PC-9 (cell line): ENCODE measurements at regions of chr12 and their contacts with region 1.

Region 1: GRCh38 chr12:133231001-133231400 is 4.7 kb downstream of the ANHX start:
- DNase-seq: no peak
- H3K4me3 ChIP-seq: no peak overlapping the region
- H3K27ac ChIP-seq: no peak overlapping the region
- H3K4me1 ChIP-seq: no peaks in the 10 kb centered on the region
- H3K27me3 ChIP-seq: no peaks in the 10 kb centered on the region
- CTCF ChIP-seq: no peak

Region 2: GRCh38 chr12:132972374-132972773 is 258.6 kb before region 1 on chr12:
- CTCF ChIA-PET with region 1: interaction called, 10 read pairs
- POLR2A ChIA-PET with region 1: no interaction called
- intact Hi-C with region 1: no loop called
- DNase-seq: no peak
- H3K4me3 ChIP-seq: no peak overlapping the region
- H3K27ac ChIP-seq: no peak overlapping the region
- H3K4me1 ChIP-seq: no peaks in the 10 kb centered on the region
- H3K27me3 ChIP-seq: no peaks in the 10 kb centered on the region
- CTCF ChIP-seq: no peak